ENCODE measurements at regions of chr16 and their contacts with region 1.

Region 1: GRCh38 chr16:57023541-57024249 is 34.3 kb downstream of the NLRC5 start:
- DNase-seq: peak; percentile 93
- ATAC-seq: peak; percentile 89
- H3K4me3 Mint-ChIP-seq: peak overlapping the region; percentile 41
- H3K27ac Mint-ChIP-seq: peak overlapping the region; percentile 80
- H3K4me1 Mint-ChIP-seq: peaks cover 89% of the 10 kb centered on the region
- H3K27me3 Mint-ChIP-seq: no peaks in the 10 kb centered on the region
- CTCF ChIP-seq: no peak

Region 2: GRCh38 chr16:57000271-57001025 is 23.2 kb before region 1 on chr16:
- CTCF ChIA-PET with region 1: interaction called, 8 read pairs
- POLR2A ChIA-PET with region 1: interaction called, 208 read pairs
- intact Hi-C with region 1: no loop called
- DNase-seq: peak; percentile 88
- ATAC-seq: peak; percentile 84
- H3K4me3 Mint-ChIP-seq: peak overlapping the region; percentile 51
- H3K27ac Mint-ChIP-seq: peak overlapping the region; percentile 99
- H3K4me1 Mint-ChIP-seq: peaks cover 94% of the 10 kb centered on the region
- H3K27me3 Mint-ChIP-seq: no peaks in the 10 kb centered on the region
- CTCF ChIP-seq: no peak

Region 3: GRCh38 chr16:57013229-57013628 is 10.5 kb before region 1 on chr16:
- CTCF ChIA-PET with region 1: interaction called, 6 read pairs
- POLR2A ChIA-PET with region 1: interaction called, 15 read pairs
- intact Hi-C with region 1: no loop called
- DNase-seq: no peak
- ATAC-seq: no peak
- H3K4me3 Mint-ChIP-seq: peak overlapping the region; percentile 51
- H3K27ac Mint-ChIP-seq: peak overlapping the region; percentile 97
- H3K4me1 Mint-ChIP-seq: peaks cover 81% of the 10 kb centered on the region
- H3K27me3 Mint-ChIP-seq: no peaks in the 10 kb centered on the region
- CTCF ChIP-seq: no peak

Region 4: DNA sequence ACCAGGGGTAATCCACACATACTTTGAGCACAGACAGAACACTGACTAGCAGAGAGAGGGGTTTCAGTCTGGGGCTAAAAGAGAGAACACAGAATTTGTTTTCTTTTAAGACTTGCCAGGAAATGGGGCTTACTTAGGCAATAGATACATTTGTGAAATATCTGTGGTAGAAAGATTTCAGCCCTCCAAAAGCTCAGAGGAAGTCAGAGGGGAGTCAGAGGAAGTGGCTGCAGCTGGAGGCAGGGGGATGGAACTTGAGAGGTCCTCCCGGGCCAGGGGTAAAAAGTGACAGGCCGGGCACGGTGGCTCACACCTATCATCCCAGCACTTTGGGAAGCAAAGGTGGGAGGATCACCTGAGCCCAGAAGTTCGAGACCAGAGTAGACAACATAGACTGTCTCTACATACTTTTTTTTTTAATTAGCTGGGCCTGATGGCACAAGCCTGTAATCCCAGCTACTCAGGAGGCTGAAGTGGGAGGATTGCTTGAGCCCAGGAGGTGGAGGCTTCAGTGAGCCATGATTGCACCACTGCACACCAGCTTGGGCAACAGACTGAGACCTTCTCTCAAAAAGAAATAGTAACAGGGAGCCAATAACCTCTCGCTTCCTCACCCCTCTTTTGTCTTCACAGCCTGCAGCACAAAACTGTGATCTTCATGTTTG is 15.6 kb after region 1 on chr16:
- CTCF ChIA-PET with region 1: interaction called, 21 read pairs
- POLR2A ChIA-PET with region 1: interaction called, 213 read pairs
- intact Hi-C with region 1: no loop called
- DNase-seq: peak; percentile 74
- ATAC-seq: peak; percentile 22
- H3K4me3 Mint-ChIP-seq: peak overlapping the region; percentile 46
- H3K27ac Mint-ChIP-seq: peak overlapping the region; percentile 99
- H3K4me1 Mint-ChIP-seq: peaks cover 89% of the 10 kb centered on the region
- H3K27me3 Mint-ChIP-seq: no peaks in the 10 kb centered on the region
- CTCF ChIP-seq: no peak

Measured in activated CD8-positive, alpha-beta T cell treated with anti-CD3 and anti-CD28 coated beads for 36 hours (primary cell).